B cell (primary cell): ENCODE measurements at regions of chr19 and their contacts with region 1.

Region 1: DNA sequence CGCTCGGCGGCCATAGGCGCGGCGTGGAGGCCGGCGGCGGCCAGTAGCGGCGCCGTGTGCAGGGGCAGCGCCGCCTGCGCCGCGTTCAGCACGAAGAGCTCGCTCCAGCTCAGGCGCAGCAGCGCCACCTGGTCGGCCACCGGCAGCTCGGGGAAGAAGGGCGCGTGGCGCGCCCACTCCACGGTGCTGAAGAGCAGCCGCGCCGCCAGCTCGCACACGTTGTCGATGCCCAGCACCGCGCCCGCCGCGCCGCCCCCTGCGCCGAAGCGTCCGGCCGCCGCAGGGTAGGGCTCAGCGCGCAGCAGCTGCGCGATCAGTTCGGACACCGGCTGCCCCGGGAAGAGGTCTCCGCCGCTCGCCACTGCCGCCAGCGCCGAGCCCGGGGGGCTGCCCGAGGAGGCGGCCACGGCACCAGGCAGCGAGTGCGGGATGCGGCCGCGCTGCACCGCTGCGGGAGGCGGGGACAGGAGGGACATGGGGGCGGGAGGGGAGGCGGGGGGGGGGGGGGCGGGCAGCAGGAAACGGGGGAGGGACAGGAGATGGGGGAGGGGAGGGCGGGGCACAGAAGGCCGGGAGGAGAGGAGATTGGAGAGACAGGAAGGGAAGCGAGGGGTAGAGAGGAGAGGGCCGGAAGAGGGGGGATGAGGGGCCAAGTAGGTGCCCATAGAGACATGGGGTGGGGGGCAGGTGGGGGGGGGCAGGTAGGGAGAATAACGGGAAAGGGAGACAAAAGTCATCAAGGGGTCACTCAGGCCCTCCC is 9.8 kb downstream of the OCEL1 start:
- DNase-seq: peak; percentile 88
- ATAC-seq: peak; percentile 91
- H3K4me3 ChIP-seq: peak overlapping the region in 4 of 5 experiments; percentile 55 to 69 (median 58)
- H3K4me3 Mint-ChIP-seq: peak overlapping the region; percentile 80
- H3K27ac ChIP-seq: no peak overlapping the region
- H3K27ac Mint-ChIP-seq: peak overlapping the region; percentile 53
- H3K4me1 ChIP-seq: peaks cover 8 to 11% of the 10 kb centered on the region in 2 donors
- H3K4me1 Mint-ChIP-seq: peaks cover 10% of the 10 kb centered on the region
- H3K27me3 ChIP-seq: no peaks in the 10 kb centered on the region
- H3K27me3 Mint-ChIP-seq: no peaks in the 10 kb centered on the region
- CTCF ChIP-seq: peak; percentile 70

Region 2: DNA sequence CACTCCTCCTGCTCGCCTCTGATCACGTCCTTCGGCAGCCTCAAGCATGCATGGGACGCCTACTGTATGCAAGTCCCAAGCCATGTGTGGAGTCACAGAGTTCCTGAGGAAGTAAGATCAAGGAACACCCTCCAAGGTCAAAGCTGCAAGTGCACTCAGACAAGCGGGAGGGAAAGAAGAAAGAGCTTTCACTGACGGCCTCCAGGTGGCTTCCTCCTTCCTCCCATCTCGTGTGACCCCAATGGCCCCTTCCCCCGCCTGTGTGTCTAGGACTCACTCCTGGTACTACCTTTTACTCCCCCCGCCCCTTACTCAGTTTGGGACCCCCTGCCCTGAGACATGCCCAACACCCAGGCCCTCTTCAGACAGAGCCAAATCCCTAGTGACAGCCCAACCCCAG is 166.6 kb before region 1 on chr19:
- CTCF ChIA-PET with region 1: interaction called, 11 read pairs
- POLR2A ChIA-PET with region 1: no interaction called
- intact Hi-C with region 1: no loop called
- DNase-seq: no peak
- ATAC-seq: no peak
- H3K4me3 ChIP-seq: no peak overlapping the region
- H3K4me3 Mint-ChIP-seq: no peak overlapping the region
- H3K27ac ChIP-seq: no peak overlapping the region
- H3K27ac Mint-ChIP-seq: no peak overlapping the region
- H3K4me1 ChIP-seq: peaks cover 24 to 45% of the 10 kb centered on the region in 2 donors
- H3K4me1 Mint-ChIP-seq: peaks cover 56% of the 10 kb centered on the region
- H3K27me3 ChIP-seq: no peaks in the 10 kb centered on the region
- H3K27me3 Mint-ChIP-seq: no peaks in the 10 kb centered on the region
- CTCF ChIP-seq: no peak

Region 3: GRCh38 chr19:17183858-17184321 is 51.9 kb before region 1 on chr19:
- CTCF ChIA-PET with region 1: interaction called, 11 read pairs
- POLR2A ChIA-PET with region 1: interaction called, 8 read pairs
- intact Hi-C with region 1: no loop called
- DNase-seq: peak; percentile 79
- ATAC-seq: peak; percentile 83
- H3K4me3 ChIP-seq: peak overlapping the region in 4 of 5 experiments; percentile 17 to 53 (median 33)
- H3K4me3 Mint-ChIP-seq: peak overlapping the region; percentile 85
- H3K27ac ChIP-seq: peak overlapping the region; percentile 66 to 76
- H3K27ac Mint-ChIP-seq: peak overlapping the region; percentile 88
- H3K4me1 ChIP-seq: peaks cover 19 to 25% of the 10 kb centered on the region in 2 donors
- H3K4me1 Mint-ChIP-seq: peaks cover 30% of the 10 kb centered on the region
- H3K27me3 ChIP-seq: no peaks in the 10 kb centered on the region
- H3K27me3 Mint-ChIP-seq: no peaks in the 10 kb centered on the region
- CTCF ChIP-seq: no peak

Region 4: DNA sequence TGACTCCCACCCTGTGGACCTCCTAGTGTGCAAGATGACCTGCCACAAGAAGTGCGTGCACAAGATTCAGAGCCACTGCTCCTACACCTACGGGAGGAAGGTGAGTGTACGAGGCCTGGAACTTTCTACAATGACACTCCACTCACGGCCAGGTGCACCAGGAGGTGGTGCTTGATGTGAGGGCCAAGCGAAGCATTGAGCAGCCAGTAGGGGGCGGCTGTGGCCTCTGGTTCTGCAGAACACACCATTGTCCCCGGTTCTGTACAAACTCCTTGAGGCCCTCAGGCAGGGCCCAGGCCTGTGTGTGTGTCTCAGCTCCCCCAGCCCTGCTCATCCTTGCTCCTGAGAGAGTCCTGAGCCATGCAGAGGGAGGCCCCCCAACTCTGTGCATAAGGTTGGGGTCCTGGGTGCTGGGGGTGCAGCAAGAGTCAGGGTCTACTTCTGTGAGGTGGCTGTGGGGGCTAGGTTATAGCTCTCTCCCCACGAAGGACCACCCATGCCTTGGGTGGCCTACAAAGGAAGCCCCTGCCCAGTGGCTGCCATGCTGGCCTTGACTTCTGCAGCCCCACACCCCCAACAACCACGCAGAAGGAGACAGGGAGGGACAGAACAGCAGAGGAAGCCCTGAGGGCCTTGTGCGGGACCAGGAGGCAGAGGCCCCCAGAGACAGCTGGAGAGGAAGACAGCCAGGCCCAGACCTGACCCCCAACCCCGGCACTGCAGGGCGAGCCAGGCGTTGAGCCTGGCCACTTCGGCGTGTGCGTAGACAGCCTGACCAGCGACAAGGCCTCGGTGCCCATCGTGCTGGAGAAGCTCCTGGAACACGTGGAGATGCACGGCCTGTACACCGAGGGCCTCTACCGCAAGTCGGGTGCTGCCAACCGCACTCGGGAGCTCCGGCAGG is 30.3 kb before region 1 on chr19:
- CTCF ChIA-PET with region 1: interaction called, 19 read pairs
- POLR2A ChIA-PET with region 1: no interaction called
- intact Hi-C with region 1: no loop called
- DNase-seq: peak; percentile 69
- ATAC-seq: peak; percentile 77
- H3K4me3 ChIP-seq: no peak overlapping the region
- H3K4me3 Mint-ChIP-seq: no peak overlapping the region
- H3K27ac ChIP-seq: no peak overlapping the region
- H3K27ac Mint-ChIP-seq: peak overlapping the region; percentile 61
- H3K4me1 ChIP-seq: peaks cover 0 to 7% of the 10 kb centered on the region in 2 donors
- H3K4me1 Mint-ChIP-seq: peaks cover 11% of the 10 kb centered on the region
- H3K27me3 ChIP-seq: no peaks in the 10 kb centered on the region
- H3K27me3 Mint-ChIP-seq: no peaks in the 10 kb centered on the region
- CTCF ChIP-seq: peak; percentile 72

Region 5: DNA sequence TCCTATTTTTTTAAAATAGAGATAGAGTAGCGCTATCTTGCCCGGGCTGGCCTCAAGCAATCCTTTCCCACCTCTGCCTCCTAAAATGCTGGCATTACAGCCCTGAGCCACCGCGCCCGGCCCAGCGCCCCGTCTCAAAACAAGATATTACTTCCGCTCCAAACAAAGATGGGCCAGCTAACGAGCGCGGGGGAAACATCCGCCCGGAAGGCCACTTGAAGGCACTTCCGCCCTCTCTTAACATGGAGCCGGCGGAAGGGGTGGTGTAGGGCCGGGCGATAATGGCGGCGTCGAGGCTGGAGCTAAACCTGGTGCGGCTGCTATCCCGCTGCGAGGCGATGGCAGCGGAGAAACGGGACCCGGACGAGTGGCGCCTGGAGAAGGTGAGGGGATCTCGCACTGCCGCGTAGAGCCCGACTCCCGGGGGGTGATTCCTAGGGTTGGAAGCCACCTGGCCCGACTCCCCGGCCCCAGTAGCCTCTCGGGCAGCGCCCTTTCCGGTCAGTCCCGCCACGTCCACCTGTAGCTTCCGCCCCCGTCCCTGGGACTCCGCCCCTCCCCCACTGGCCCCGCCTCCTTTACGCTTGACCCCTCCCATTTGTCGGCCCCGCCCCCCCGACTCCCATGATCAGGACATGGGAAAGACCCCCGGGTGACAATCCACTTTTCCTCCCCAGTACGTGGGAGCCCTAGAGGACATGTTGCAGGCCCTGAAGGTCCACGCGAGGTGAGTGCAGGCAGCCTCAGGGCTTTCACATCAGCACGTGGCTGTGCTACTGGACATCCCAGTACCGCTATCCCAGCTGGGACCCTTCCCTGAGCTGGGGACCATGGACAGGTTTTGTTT is 20.4 kb before region 1 on chr19 and contains the start of gene USE1:
- CTCF ChIA-PET with region 1: interaction called, 10 read pairs
- POLR2A ChIA-PET with region 1: interaction called, 4 read pairs
- intact Hi-C with region 1: loop called (anchors 1 kb)
- DNase-seq: peak; percentile 93
- ATAC-seq: peak; percentile 93
- H3K4me3 ChIP-seq: peak within 1 kb of the TSS; percentile 41 to 94 (median 80)
- H3K4me3 Mint-ChIP-seq: peak within 1 kb of the TSS; percentile 92
- H3K27ac ChIP-seq: peak within 1 kb of the TSS; percentile 91
- H3K27ac Mint-ChIP-seq: peak within 1 kb of the TSS; percentile 97
- H3K4me1 ChIP-seq: peaks cover 10 to 24% of the 10 kb centered on the region in 2 donors
- H3K4me1 Mint-ChIP-seq: peaks cover 19% of the 10 kb centered on the region
- H3K27me3 ChIP-seq: no peaks in the 10 kb centered on the region
- H3K27me3 Mint-ChIP-seq: no peaks in the 10 kb centered on the region
- CTCF ChIP-seq: no peak
- total RNA-seq, gene USE1: 39.9 and 49.5 TPM in 2 replicates

Region 6: DNA sequence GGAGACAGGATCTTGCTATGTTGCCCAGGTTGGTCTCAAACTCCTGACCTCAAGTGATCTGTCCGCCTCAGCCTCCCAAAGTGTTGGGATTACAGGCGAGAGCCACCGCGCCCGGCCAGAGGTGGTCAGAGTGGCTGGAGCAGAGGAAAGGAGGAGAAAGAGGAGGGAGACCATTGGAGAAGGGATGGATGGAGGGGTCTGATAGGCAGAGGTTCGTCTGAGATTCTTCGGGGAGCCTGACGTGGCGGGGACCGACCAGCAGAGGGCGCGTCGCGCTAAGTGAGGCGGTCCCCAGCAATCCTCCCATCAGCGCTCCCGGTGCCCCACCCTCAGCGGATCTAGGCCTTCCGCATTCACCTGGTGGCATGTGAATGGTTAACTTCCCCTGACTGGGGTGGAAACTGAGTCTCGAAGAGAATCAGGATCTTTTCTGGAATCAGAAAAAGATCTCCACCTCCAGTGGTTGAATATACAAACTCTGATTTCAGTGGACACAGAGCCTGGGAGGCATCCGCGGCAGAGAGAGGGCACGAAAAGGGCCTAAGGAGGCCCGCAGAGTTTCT is 110.4 kb after region 1 on chr19:
- CTCF ChIA-PET with region 1: no interaction called
- POLR2A ChIA-PET with region 1: no interaction called
- intact Hi-C with region 1: no loop called
- DNase-seq: peak; percentile 84
- ATAC-seq: peak; percentile 98
- H3K4me3 ChIP-seq: no peak overlapping the region
- H3K4me3 Mint-ChIP-seq: no peak overlapping the region
- H3K27ac ChIP-seq: no peak overlapping the region
- H3K27ac Mint-ChIP-seq: no peak overlapping the region
- H3K4me1 ChIP-seq: peaks cover 5 to 6% of the 10 kb centered on the region in 2 donors
- H3K4me1 Mint-ChIP-seq: peaks cover 6% of the 10 kb centered on the region
- H3K27me3 ChIP-seq: peaks cover 0 to 32% (median 12%) of the 10 kb centered on the region in 4 experiments
- H3K27me3 Mint-ChIP-seq: peaks cover 26% of the 10 kb centered on the region
- CTCF ChIP-seq: peak; percentile 93

Region 7: GRCh38 chr19:17441241-17442021 is 205.6 kb after region 1 on chr19:
- CTCF ChIA-PET with region 1: no interaction called
- POLR2A ChIA-PET with region 1: no interaction called
- intact Hi-C with region 1: no loop called
- DNase-seq: peak; percentile 48
- ATAC-seq: peak; percentile 31
- H3K4me3 ChIP-seq: no peak overlapping the region
- H3K4me3 Mint-ChIP-seq: no peak overlapping the region
- H3K27ac ChIP-seq: no peak overlapping the region
- H3K27ac Mint-ChIP-seq: no peak overlapping the region
- H3K4me1 ChIP-seq: no peaks in the 10 kb centered on the region
- H3K4me1 Mint-ChIP-seq: no peaks in the 10 kb centered on the region
- H3K27me3 ChIP-seq: no peaks in the 10 kb centered on the region
- H3K27me3 Mint-ChIP-seq: no peaks in the 10 kb centered on the region
- CTCF ChIP-seq: peak; percentile 18

Region 8: GRCh38 chr19:18091217-18091608 is 855.4 kb after region 1 on chr19:
- CTCF ChIA-PET with region 1: no interaction called
- POLR2A ChIA-PET with region 1: interaction called, 13 read pairs
- intact Hi-C with region 1: no loop called
- DNase-seq: peak; percentile 91
- ATAC-seq: peak; percentile 65
- H3K4me3 ChIP-seq: peak overlapping the region in 2 of 5 experiments; percentile 18 to 44
- H3K4me3 Mint-ChIP-seq: peak overlapping the region; percentile 80
- H3K27ac ChIP-seq: peak overlapping the region; percentile 94 to 97
- H3K27ac Mint-ChIP-seq: peak overlapping the region; percentile 97
- H3K4me1 ChIP-seq: peaks cover 52 to 62% of the 10 kb centered on the region in 2 donors
- H3K4me1 Mint-ChIP-seq: peaks cover 54% of the 10 kb centered on the region
- H3K27me3 ChIP-seq: no peaks in the 10 kb centered on the region
- H3K27me3 Mint-ChIP-seq: no peaks in the 10 kb centered on the region
- CTCF ChIP-seq: no peak